ENCODE measurements at regions of chr6 and their contacts with region 1.

Region 1: GRCh38 chr6:132863895-132864294 is 49.5 kb downstream of the RPS12 start:
- DNase-seq: no peak
- H3K4me3 ChIP-seq: no peak overlapping the region
- H3K27ac ChIP-seq: no peak overlapping the region
- H3K4me1 ChIP-seq: no peaks in the 10 kb centered on the region
- H3K27me3 ChIP-seq: no peaks in the 10 kb centered on the region
- CTCF ChIP-seq: no peak

Region 2: GRCh38 chr6:132598473-132598872 is 265.4 kb before region 1 on chr6:
- CTCF ChIA-PET with region 1: no interaction called
- dilution Hi-C with region 1: no loop called
- in situ Hi-C with region 1: no loop called
- intact Hi-C with region 1: no loop called
- DNase-seq: no peak
- H3K4me3 ChIP-seq: no peak overlapping the region
- H3K27ac ChIP-seq: no peak overlapping the region
- H3K4me1 ChIP-seq: no peaks in the 10 kb centered on the region
- H3K27me3 ChIP-seq: peaks cover 3% of the 10 kb centered on the region
- CTCF ChIP-seq: peak; percentile 38 to 39

Region 3: GRCh38 chr6:132907914-132908313 is 44.0 kb after region 1 on chr6:
- CTCF ChIA-PET with region 1: no interaction called
- dilution Hi-C with region 1: loop called (anchors 5 kb)
- in situ Hi-C with region 1: no loop called
- intact Hi-C with region 1: no loop called
- DNase-seq: peak; percentile 21
- H3K4me3 ChIP-seq: no peak overlapping the region
- H3K27ac ChIP-seq: no peak overlapping the region
- H3K4me1 ChIP-seq: no peaks in the 10 kb centered on the region
- H3K27me3 ChIP-seq: no peaks in the 10 kb centered on the region
- CTCF ChIP-seq: no peak

Region 4: GRCh38 chr6:133300896-133301295 is 437.0 kb after region 1 on chr6:
- CTCF ChIA-PET with region 1: no interaction called
- dilution Hi-C with region 1: no loop called
- in situ Hi-C with region 1: no loop called
- intact Hi-C with region 1: no loop called
- DNase-seq: no peak
- H3K4me3 ChIP-seq: no peak overlapping the region
- H3K27ac ChIP-seq: no peak overlapping the region
- H3K4me1 ChIP-seq: no peaks in the 10 kb centered on the region
- H3K27me3 ChIP-seq: peaks cover 5% of the 10 kb centered on the region
- CTCF ChIP-seq: no peak

Measured in mammary epithelial cell (primary cell).